ENCODE measurements at regions of chr14 and their contacts with region 1.

Region 1: GRCh38 chr14:62126879-62127478 is 364.8 kb downstream of the SNAPC1 start:
- DNase-seq: peak; percentile 40
- ATAC-seq: peak; percentile 81
- H3K4me3 ChIP-seq: no peak overlapping the region
- H3K27ac ChIP-seq: no peak overlapping the region
- H3K4me1 ChIP-seq: no peaks in the 10 kb centered on the region
- H3K27me3 ChIP-seq: peaks cover 16% of the 10 kb centered on the region
- CTCF ChIP-seq: peak; percentile 58 to 76 (median 66)
- POLR2A ChIP-seq: no peak
- RAD21 ChIP-seq: peak; percentile 67

Region 2: DNA sequence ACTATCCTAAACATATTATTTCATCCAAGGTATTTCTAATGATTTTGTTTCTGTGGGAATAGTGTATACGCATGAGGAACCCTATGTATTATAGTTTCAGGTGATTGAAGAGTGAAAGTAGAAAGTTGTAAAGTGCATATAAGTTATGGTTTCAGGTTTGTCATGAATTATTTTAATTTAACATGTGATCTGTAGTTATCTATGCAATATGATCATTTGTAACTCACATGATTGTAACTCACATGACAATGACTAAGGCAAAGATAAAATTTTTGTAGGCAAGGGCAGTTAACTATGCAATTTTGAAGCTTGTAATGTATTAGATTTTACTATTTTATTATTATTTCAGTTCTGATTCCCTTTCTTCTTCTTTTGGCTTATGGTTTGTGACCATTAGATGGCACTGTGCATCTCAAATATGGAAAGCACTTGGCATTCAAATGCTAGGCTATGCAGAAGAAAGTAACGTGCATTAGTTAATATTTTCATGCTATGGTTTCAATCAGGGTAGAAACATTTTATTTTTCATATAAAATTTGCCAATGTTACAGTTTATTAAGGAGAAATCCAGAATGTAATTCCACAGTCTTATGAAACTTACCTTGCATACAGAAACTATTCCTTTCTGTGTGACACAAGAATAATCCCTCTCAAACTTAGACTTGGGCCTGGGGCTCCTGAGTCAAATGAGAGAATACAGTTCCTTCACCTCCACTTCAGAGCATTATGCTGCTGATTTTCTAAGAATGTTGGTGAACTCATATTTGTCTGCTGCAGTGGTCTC is 830.1 kb before region 1 on chr14:
- CTCF ChIA-PET with region 1: interaction called, 5 read pairs
- POLR2A ChIA-PET with region 1: no interaction called
- RAD21 ChIA-PET with region 1: no interaction called
- intact Hi-C with region 1: loop called (anchors 10 kb)
- DNase-seq: peak; percentile 27
- ATAC-seq: peak; percentile 67
- H3K4me3 ChIP-seq: no peak overlapping the region
- H3K27ac ChIP-seq: no peak overlapping the region
- H3K4me1 ChIP-seq: no peaks in the 10 kb centered on the region
- H3K27me3 ChIP-seq: no peaks in the 10 kb centered on the region
- CTCF ChIP-seq: peak; percentile 64 to 73 (median 68); a peak in 5 of 6 replicates
- POLR2A ChIP-seq: no peak
- RAD21 ChIP-seq: peak; percentile 82

Region 3: GRCh38 chr14:61461808-61462275 is 665.1 kb before region 1 on chr14:
- CTCF ChIA-PET with region 1: interaction called, 4 read pairs
- POLR2A ChIA-PET with region 1: no interaction called
- RAD21 ChIA-PET with region 1: no interaction called
- intact Hi-C with region 1: loop called (anchors 1 kb)
- DNase-seq: peak; percentile 34
- ATAC-seq: peak; percentile 70
- H3K4me3 ChIP-seq: no peak overlapping the region
- H3K27ac ChIP-seq: no peak overlapping the region
- H3K4me1 ChIP-seq: peaks cover 0 to 7% of the 10 kb centered on the region in 2 experiments; a peak in 2 of 4 replicates
- H3K27me3 ChIP-seq: no peaks in the 10 kb centered on the region
- CTCF ChIP-seq: peak; percentile 60 to 83 (median 69); a peak in 5 of 6 replicates
- POLR2A ChIP-seq: no peak
- RAD21 ChIP-seq: peak; percentile 83

Region 4: GRCh38 chr14:61894452-61895077 is 232.4 kb before region 1 on chr14:
- CTCF ChIA-PET with region 1: interaction called, 18 read pairs
- POLR2A ChIA-PET with region 1: no interaction called
- RAD21 ChIA-PET with region 1: no interaction called
- intact Hi-C with region 1: loop called (anchors 1 kb)
- DNase-seq: peak; percentile 44
- ATAC-seq: peak; percentile 92
- H3K4me3 ChIP-seq: no peak overlapping the region
- H3K27ac ChIP-seq: no peak overlapping the region
- H3K4me1 ChIP-seq: no peaks in the 10 kb centered on the region
- H3K27me3 ChIP-seq: peaks cover 51% of the 10 kb centered on the region
- CTCF ChIP-seq: peak; percentile 38 to 84 (median 78); a peak in 5 of 6 replicates
- POLR2A ChIP-seq: no peak
- RAD21 ChIP-seq: peak; percentile 62

Region 5: GRCh38 chr14:61925043-61925442 is 201.9 kb before region 1 on chr14:
- CTCF ChIA-PET with region 1: interaction called, 33 read pairs
- POLR2A ChIA-PET with region 1: no interaction called
- RAD21 ChIA-PET with region 1: interaction called in 1 of 2 experiments, 3 read pairs
- intact Hi-C with region 1: loop called (anchors 2 kb)
- DNase-seq: peak; percentile 18
- ATAC-seq: peak; percentile 73
- H3K4me3 ChIP-seq: no peak overlapping the region
- H3K27ac ChIP-seq: no peak overlapping the region
- H3K4me1 ChIP-seq: no peaks in the 10 kb centered on the region
- H3K27me3 ChIP-seq: peaks cover 63% of the 10 kb centered on the region
- CTCF ChIP-seq: peak in 2 of 3 experiments; percentile 42; a peak in 4 of 6 replicates
- POLR2A ChIP-seq: no peak
- RAD21 ChIP-seq: no peak

Region 6: DNA sequence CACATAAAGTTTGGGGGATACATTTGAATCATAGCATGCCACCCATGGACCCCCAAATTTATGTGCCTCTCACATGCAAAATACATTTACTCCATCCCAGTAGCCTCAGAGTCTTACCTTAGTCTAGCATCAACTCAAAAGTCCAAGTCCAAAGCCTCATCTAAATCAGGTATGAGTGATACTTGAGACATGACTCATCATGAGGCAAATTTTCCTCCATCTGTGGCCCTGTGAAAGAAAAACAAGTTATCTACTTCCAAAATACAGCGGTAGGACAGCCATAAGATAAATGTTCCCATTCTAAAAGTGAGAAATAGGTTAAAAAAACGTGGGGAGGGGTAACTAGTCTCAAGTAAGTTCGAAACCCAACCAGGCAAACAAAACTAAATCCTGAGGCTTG is 79.5 kb after region 1 on chr14:
- CTCF ChIA-PET with region 1: no interaction called
- POLR2A ChIA-PET with region 1: no interaction called
- RAD21 ChIA-PET with region 1: no interaction called
- intact Hi-C with region 1: no loop called
- DNase-seq: no peak
- ATAC-seq: no peak
- H3K4me3 ChIP-seq: no peak overlapping the region
- H3K27ac ChIP-seq: no peak overlapping the region
- H3K4me1 ChIP-seq: no peaks in the 10 kb centered on the region
- H3K27me3 ChIP-seq: no peaks in the 10 kb centered on the region
- CTCF ChIP-seq: no peak
- POLR2A ChIP-seq: no peak
- RAD21 ChIP-seq: no peak

Measured in HCT116 (cell line).